ENCODE measurements at regions of chr2 and their contacts with region 1.

Region 1: GRCh38 chr2:219119422-219120043 is 41.1 kb downstream of the NHEJ1 start:
- DNase-seq: peak; percentile 72
- ATAC-seq: peak; percentile 81
- H3K4me3 ChIP-seq: no peak overlapping the region
- H3K27ac ChIP-seq: no peak overlapping the region
- H3K4me1 ChIP-seq: peaks cover 26% of the 10 kb centered on the region
- H3K27me3 ChIP-seq: no peaks in the 10 kb centered on the region
- CTCF ChIP-seq: peak; percentile 70

Region 2: GRCh38 chr2:218984239-218985020 is 135.1 kb before region 1 on chr2:
- intact Hi-C with region 1: no loop called
- DNase-seq: no peak
- ATAC-seq: no peak
- H3K4me3 ChIP-seq: peak overlapping the region; percentile 14
- H3K27ac ChIP-seq: no peak overlapping the region
- H3K4me1 ChIP-seq: peaks cover 45% of the 10 kb centered on the region
- H3K27me3 ChIP-seq: peaks cover 99% of the 10 kb centered on the region
- CTCF ChIP-seq: no peak

Region 3: GRCh38 chr2:219073413-219074129 is 46.0 kb before region 1 on chr2:
- intact Hi-C with region 1: loop called (anchors 10 kb)
- DNase-seq: no peak
- ATAC-seq: peak; percentile 76
- H3K4me3 ChIP-seq: no peak overlapping the region
- H3K27ac ChIP-seq: no peak overlapping the region
- H3K4me1 ChIP-seq: no peaks in the 10 kb centered on the region
- H3K27me3 ChIP-seq: no peaks in the 10 kb centered on the region
- CTCF ChIP-seq: peak; percentile 62

Region 4: GRCh38 chr2:219198974-219199373 is 79.4 kb after region 1 on chr2:
- intact Hi-C with region 1: no loop called
- DNase-seq: no peak
- ATAC-seq: no peak
- H3K4me3 ChIP-seq: no peak overlapping the region
- H3K27ac ChIP-seq: no peak overlapping the region
- H3K4me1 ChIP-seq: no peaks in the 10 kb centered on the region
- H3K27me3 ChIP-seq: no peaks in the 10 kb centered on the region
- CTCF ChIP-seq: no peak

Measured in upper lobe of right lung (tissue), 1 donor.